ENCODE measurements at regions of chr4 and their contacts with region 1.

Region 1: GRCh38 chr4:176230836-176231235 is 35.5 kb upstream of the SPATA4 start:
- DNase-seq: no peak
- ATAC-seq: no peak
- H3K4me3 ChIP-seq: no peak overlapping the region
- H3K27ac ChIP-seq: no peak overlapping the region
- H3K4me1 ChIP-seq: no peaks in the 10 kb centered on the region; a peak in 1 of 5 replicates
- H3K27me3 ChIP-seq: no peaks in the 10 kb centered on the region
- CTCF ChIP-seq: no peak
- EP300 ChIP-seq: no peak
- POLR2A ChIP-seq: no peak
- RAD21 ChIP-seq: no peak

Region 2: GRCh38 chr4:176090115-176090514 is 140.7 kb before region 1 on chr4:
- CTCF ChIA-PET with region 1: no interaction called
- POLR2A ChIA-PET with region 1: no interaction called
- in situ Hi-C with region 1: no loop called
- intact Hi-C with region 1: no loop called
- DNase-seq: no peak
- ATAC-seq: no peak
- H3K4me3 ChIP-seq: no peak overlapping the region
- H3K27ac ChIP-seq: no peak overlapping the region
- H3K4me1 ChIP-seq: no peaks in the 10 kb centered on the region
- H3K27me3 ChIP-seq: no peaks in the 10 kb centered on the region
- CTCF ChIP-seq: no peak
- EP300 ChIP-seq: no peak
- POLR2A ChIP-seq: no peak
- RAD21 ChIP-seq: no peak

Region 3: DNA sequence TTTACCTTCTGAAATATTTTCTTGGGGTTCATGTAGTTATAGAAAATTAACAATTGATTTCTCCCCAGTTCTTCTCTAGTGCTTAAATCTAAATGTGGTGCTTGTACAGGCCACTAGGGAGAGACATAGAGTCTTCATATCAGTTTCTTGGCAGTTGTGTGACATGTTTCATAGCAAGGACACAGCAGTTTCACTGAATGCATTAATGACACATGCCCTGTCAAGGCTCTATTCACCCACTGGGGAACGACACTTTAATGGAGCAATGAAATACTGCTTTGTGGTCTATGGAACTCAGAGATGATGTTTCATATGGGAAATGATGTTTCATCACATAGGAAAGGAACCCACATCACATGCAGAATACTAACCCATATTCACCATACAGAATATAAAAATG is 559.1 kb after region 1 on chr4:
- CTCF ChIA-PET with region 1: no interaction called
- POLR2A ChIA-PET with region 1: no interaction called
- in situ Hi-C with region 1: no loop called
- intact Hi-C with region 1: loop called (anchors 5 kb)
- DNase-seq: peak; percentile 3 to 15 (median 10)
- ATAC-seq: no peak
- H3K4me3 ChIP-seq: no peak overlapping the region
- H3K27ac ChIP-seq: no peak overlapping the region
- H3K4me1 ChIP-seq: no peaks in the 10 kb centered on the region
- H3K27me3 ChIP-seq: no peaks in the 10 kb centered on the region
- CTCF ChIP-seq: peak in 2 of 3 experiments; percentile 20 to 31; a peak in 1 of 6 replicates
- EP300 ChIP-seq: no peak
- POLR2A ChIP-seq: no peak
- RAD21 ChIP-seq: no peak; a peak in 1 of 4 replicates